MCF 10A (cell line): ENCODE measurements at regions of chr15 and their contacts with region 1.

Region 1: DNA sequence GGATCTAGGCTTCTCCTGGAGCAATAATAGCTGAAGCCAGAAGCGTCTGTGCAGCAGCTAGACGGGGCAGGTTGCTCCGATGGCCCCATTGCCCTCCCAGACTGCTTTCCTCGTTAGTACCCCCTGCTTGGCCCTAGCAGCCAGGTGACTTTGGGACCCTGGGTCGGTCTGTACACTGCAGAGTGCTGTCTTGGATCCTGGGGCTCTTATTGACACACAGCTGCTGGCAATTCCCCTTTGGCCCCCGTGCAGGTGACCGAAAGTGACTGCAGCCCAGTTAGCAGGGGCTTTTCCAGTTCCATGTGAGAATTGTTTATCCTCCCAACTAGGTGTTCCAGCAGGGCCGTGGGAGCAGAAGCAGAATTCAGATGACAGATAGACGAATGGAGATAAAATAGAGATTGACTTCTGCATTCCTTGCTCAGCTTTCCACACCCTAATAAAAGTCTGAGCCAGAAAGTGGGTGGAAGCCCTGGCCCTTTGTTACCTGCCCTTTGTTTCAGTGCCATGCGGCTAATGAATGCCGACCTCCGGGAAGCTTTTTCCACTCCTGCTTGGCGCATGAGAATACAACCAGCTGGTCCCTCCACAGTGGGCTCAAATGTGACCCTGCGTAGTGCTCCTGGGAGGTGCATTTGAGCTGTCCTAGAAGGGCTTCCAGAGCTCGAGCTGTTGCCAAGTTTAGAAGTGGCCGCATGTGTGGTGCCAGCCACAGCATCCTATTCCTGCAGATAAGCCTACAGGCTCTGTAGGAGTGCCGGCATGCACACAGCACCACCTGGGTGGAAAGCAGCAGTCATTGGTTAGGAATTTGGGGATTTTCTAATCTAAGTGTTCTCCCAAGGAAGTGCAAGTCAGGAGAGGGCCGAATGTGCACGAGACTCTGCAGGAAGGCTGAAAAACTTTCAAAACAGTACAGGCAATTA is 94.4 kb downstream of the SLCO3A1 start:
- DNase-seq: peak; percentile 74
- H3K4me3 Mint-ChIP-seq: peak overlapping the region; percentile 49
- H3K27ac Mint-ChIP-seq: peak overlapping the region; percentile 90
- H3K4me1 Mint-ChIP-seq: peaks cover 72% of the 10 kb centered on the region
- H3K27me3 Mint-ChIP-seq: no peaks in the 10 kb centered on the region
- CTCF ChIP-seq: no peak

Region 2: GRCh38 chr15:91965501-91966184 is 17.7 kb after region 1 on chr15:
- CTCF ChIA-PET with region 1: interaction called, 3 read pairs
- POLR2A ChIA-PET with region 1: interaction called, 10 read pairs
- intact Hi-C with region 1: no loop called
- DNase-seq: peak; percentile 98
- H3K4me3 Mint-ChIP-seq: peak overlapping the region; percentile 60
- H3K27ac Mint-ChIP-seq: peak overlapping the region; percentile 96
- H3K4me1 Mint-ChIP-seq: peaks cover 47% of the 10 kb centered on the region
- H3K27me3 Mint-ChIP-seq: no peaks in the 10 kb centered on the region
- CTCF ChIP-seq: no peak